IMR-90 (cell line): ENCODE measurements at regions of chr12 and their contacts with region 1.

Region 1: DNA sequence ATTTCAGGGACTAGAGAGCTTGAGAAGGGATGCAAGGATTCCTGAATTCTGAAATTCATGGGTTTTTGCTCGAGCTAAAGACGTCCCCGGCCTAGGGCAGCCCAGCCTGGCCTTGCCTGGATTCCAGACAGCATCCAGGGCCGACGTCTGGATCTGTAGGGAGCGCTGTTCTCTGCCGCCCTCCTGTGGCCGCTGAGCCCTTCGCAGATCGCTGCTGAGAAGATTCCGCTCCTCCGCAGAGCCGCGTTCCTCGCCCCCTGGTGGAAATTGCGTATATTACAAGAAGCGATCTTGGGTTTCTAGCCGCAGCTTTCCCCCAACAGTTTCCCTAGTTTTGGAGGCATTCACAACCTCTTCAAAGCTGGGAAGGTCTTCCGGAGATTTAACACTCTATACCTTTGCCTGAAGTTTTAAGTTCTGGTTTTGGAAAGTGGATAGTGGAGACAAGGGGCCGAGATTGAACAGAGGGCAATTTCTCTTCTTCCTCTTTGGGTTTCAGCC is 5.1 kb downstream of the CISTR start:
- DNase-seq: peak; percentile 87
- ATAC-seq: peak; percentile 96
- H3K4me3 ChIP-seq: no peak overlapping the region
- H3K27ac ChIP-seq: no peak overlapping the region
- H3K4me1 ChIP-seq: peaks cover 4% of the 10 kb centered on the region; the same call in 1 of the 2 replicates
- H3K27me3 ChIP-seq: peaks cover 70% of the 10 kb centered on the region
- CTCF ChIP-seq: peak; percentile 100; the same call in 1 of the 2 replicates
- POLR2A ChIP-seq: 0 out of 2 replicates have a peak, but pooled peaks have one; percentile 39
- RAD21 ChIP-seq: peak; percentile 93

Region 2: GRCh38 chr12:52442600-52443061 is 1304.0 kb before region 1 on chr12:
- CTCF ChIA-PET with region 1: no interaction called
- POLR2A ChIA-PET with region 1: no interaction called
- dilution Hi-C with region 1: no loop called
- in situ Hi-C with region 1: no loop called
- intact Hi-C with region 1: no loop called
- DNase-seq: peak; percentile 74
- ATAC-seq: no peak
- H3K4me3 ChIP-seq: no peak overlapping the region
- H3K27ac ChIP-seq: no peak overlapping the region
- H3K4me1 ChIP-seq: no peaks in the 10 kb centered on the region; the same call in 1 of the 2 replicates
- H3K27me3 ChIP-seq: peaks cover 12% of the 10 kb centered on the region
- CTCF ChIP-seq: no peak
- POLR2A ChIP-seq: no peak
- RAD21 ChIP-seq: no peak

Region 3: GRCh38 chr12:53295070-53295890 is 451.4 kb before region 1 on chr12 and contains the start of gene PFDN5:
- CTCF ChIA-PET with region 1: no interaction called
- POLR2A ChIA-PET with region 1: no interaction called
- dilution Hi-C with region 1: no loop called
- in situ Hi-C with region 1: no loop called
- intact Hi-C with region 1: no loop called
- DNase-seq: peak; percentile 92
- ATAC-seq: peak; percentile 83
- H3K4me3 ChIP-seq: peak within 1 kb of the TSS; percentile 92
- H3K27ac ChIP-seq: peak within 1 kb of the TSS; percentile 95
- H3K4me1 ChIP-seq: peaks cover 20% of the 10 kb centered on the region
- H3K27me3 ChIP-seq: no peaks in the 10 kb centered on the region
- CTCF ChIP-seq: no peak
- POLR2A ChIP-seq: peak; percentile 92
- RAD21 ChIP-seq: no peak
- total RNA-seq, gene PFDN5: 764 and 1,011 TPM in 2 replicates

Region 4: DNA sequence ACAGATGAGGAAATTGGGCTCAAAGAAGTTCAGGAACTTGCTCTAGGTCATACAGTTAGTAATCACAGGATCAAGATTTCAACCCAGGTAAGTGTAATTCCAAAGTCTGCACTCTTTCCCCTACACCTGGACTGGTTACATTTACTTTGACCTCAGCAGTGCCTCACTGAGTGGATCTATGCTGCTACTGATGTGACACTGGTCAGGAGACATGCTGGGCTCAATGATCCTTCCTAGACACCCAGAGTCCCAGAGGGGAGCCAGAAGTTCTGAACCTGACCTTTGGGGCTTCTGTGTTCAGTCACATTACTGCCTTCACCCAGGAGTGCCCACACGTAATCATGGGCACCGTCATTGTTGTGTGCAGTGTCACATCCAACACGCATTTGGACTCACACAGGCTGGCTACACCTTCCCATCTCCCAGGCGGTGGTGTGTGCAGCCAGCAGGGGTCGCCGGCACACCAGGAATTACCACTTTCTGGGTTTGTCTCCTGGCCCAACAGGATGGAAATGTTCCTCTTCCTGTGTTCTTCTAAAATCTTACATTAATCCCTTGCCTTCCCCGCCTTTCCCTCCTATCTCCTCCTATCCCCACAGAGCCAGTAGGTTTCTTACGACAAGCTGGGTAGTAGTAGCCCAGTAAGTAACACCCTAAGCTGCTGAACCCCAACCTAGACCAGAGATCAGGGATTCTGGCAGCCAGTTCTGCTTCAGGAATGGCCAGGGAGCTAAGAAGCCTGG is 45.0 kb before region 1 on chr12:
- CTCF ChIA-PET with region 1: interaction called, 48 read pairs
- POLR2A ChIA-PET with region 1: no interaction called
- dilution Hi-C with region 1: no loop called
- in situ Hi-C with region 1: loop called (anchors 5 kb)
- intact Hi-C with region 1: loop called (anchors 1 kb)
- DNase-seq: peak; percentile 66
- ATAC-seq: peak; percentile 98
- H3K4me3 ChIP-seq: no peak overlapping the region
- H3K27ac ChIP-seq: no peak overlapping the region
- H3K4me1 ChIP-seq: no peaks in the 10 kb centered on the region
- H3K27me3 ChIP-seq: peaks cover 67% of the 10 kb centered on the region
- CTCF ChIP-seq: peak; percentile 98
- POLR2A ChIP-seq: no peak
- RAD21 ChIP-seq: peak; percentile 97

Region 5: DNA sequence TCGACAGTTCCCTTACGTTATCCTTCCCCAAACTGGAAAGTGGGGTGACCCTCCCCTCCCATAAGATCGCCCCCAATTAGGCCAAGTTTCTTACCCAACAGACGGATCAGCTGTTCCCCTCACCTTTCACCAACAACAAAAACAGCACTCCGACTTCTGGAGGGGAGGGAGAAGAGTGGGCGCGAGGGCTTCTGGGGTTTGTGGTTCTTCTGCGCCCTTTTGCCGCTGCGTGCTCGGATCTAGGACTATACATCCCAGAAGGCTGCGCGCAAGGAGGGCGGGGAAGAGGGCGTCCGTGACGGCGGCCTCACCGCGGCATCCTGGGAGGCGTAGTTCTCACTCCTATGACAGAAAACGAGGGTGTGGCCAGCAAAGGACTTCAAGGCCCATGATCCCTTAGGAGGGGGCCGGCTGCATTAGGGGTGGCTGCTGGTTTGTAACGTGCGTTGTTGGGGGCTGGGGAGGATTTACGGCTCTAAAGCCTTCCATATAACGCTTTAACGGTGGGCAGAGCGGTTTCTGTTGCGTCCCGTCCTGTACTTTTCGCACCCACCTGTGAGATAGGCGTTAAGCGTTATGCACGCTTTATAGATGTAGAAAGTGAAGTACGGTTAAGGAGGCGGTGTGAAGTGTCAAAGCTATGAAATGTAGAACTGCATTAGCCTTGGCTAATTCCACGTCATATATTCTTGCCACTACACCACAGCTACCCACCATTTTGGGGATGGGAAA is 19.2 kb before region 1 on chr12 and contains the start of gene CALCOCO1:
- CTCF ChIA-PET with region 1: interaction called, 11 read pairs
- POLR2A ChIA-PET with region 1: no interaction called
- dilution Hi-C with region 1: no loop called
- in situ Hi-C with region 1: no loop called
- intact Hi-C with region 1: no loop called
- DNase-seq: peak; percentile 97
- ATAC-seq: peak; percentile 99
- H3K4me3 ChIP-seq: peak within 1 kb of the TSS; percentile 77
- H3K27ac ChIP-seq: peak within 1 kb of the TSS; percentile 88
- H3K4me1 ChIP-seq: peaks cover 14% of the 10 kb centered on the region
- H3K27me3 ChIP-seq: peaks cover 1% of the 10 kb centered on the region; the same call in 1 of the 2 replicates
- CTCF ChIP-seq: no peak
- POLR2A ChIP-seq: no peak; the same call in 1 of the 2 replicates
- RAD21 ChIP-seq: no peak
- total RNA-seq, gene CALCOCO1: 100.0 and 169 TPM in 2 replicates

Region 6: GRCh38 chr12:53757095-53757770 is 10.6 kb after region 1 on chr12:
- CTCF ChIA-PET with region 1: interaction called, 14 read pairs
- POLR2A ChIA-PET with region 1: no interaction called
- dilution Hi-C with region 1: no loop called
- in situ Hi-C with region 1: no loop called
- intact Hi-C with region 1: no loop called
- DNase-seq: peak; percentile 55
- ATAC-seq: peak; percentile 89
- H3K4me3 ChIP-seq: no peak overlapping the region
- H3K27ac ChIP-seq: no peak overlapping the region
- H3K4me1 ChIP-seq: peaks cover 2% of the 10 kb centered on the region
- H3K27me3 ChIP-seq: peaks cover 68% of the 10 kb centered on the region
- CTCF ChIP-seq: peak; percentile 64
- POLR2A ChIP-seq: no peak
- RAD21 ChIP-seq: peak; percentile 47

Region 7: GRCh38 chr12:53805791-53806190 is 59.1 kb after region 1 on chr12:
- CTCF ChIA-PET with region 1: no interaction called
- POLR2A ChIA-PET with region 1: interaction called, 15 read pairs
- dilution Hi-C with region 1: no loop called
- in situ Hi-C with region 1: no loop called
- intact Hi-C with region 1: no loop called
- DNase-seq: peak; percentile 55
- ATAC-seq: no peak
- H3K4me3 ChIP-seq: no peak overlapping the region
- H3K27ac ChIP-seq: no peak overlapping the region
- H3K4me1 ChIP-seq: peaks cover 7% of the 10 kb centered on the region
- H3K27me3 ChIP-seq: peaks cover 36% of the 10 kb centered on the region
- CTCF ChIP-seq: no peak
- POLR2A ChIP-seq: no peak
- RAD21 ChIP-seq: no peak